Ascending aorta (tissue), 2 donors: ENCODE measurements at regions of chr2 and their contacts with region 1.

Region 1: DNA sequence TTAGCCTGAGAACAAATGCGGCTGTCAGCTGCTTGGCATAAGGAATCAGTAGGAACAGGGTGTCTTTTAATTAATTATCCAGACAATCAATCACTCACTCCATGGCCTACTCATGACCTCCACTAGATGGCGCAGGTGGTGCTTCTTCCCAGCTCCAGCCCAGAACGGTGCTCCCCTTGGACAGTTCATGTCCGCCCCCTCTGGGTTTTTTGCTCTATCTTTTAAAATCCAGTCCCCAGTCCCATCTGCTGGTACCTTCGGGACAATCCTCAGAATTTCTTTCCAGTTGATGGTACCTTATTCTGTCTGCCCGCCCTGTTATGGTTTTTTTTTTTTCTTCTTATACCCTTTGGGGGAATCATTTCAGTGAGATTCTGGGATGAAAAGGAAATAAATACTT is 99.8 kb downstream of the CACNB4 start:
- DNase-seq: no peak
- H3K4me3 ChIP-seq: no peak overlapping the region
- H3K27ac ChIP-seq: no peak overlapping the region
- H3K4me1 ChIP-seq: peaks cover 7 to 12% of the 10 kb centered on the region in 2 donors
- H3K27me3 ChIP-seq: no peaks in the 10 kb centered on the region
- CTCF ChIP-seq: peak; percentile 13 to 60 (median 52)

Region 2: DNA sequence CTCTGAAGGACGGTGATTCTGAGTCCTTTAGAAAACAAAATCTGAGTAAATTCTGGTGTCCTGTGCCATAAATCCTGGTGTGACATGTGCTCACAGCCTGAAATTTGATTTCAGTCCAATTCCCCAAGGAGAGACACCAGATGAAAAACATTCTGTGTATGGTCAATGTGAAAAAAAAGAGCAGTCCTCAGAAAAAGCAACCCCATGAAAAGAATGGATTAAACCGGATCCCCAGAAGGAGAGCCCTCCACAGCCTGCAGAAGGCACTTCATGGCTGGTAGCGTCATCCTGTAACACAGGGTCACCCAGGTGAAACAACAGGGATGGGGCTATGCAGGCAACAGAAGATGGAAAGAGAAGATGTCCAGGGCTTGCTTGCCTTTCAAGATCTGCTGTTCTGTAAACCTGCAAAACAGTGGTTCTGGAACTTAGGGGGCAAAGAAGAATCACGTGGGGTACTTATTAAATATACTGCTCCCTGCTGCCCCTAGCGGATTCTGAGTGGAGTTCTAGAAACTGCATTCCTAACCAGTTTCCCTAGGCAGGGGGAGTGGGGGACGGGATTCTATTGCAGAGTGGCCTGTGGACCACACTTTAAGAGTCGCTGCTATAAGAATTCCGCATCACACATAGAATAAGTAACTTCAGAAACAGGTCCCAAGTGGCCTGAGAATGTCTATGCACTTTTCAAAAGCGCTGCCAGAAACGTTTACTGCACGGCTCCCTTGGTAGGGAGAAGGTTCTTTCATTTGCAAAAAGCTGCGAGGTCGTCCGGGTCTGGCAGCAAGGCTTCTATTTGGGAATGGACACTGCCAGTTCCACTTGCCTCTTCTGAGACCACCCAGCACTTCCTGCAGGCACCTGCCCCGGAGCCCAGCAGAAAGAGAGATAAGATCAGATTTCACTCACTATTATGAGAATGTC is 51.9 kb before region 1 on chr2:
- intact Hi-C with region 1: loop called (anchors 2 kb)
- DNase-seq: peak in 1 of 2 donors; percentile 72
- H3K4me3 ChIP-seq: peak overlapping the region; percentile 51 to 53
- H3K27ac ChIP-seq: peak overlapping the region; percentile 69 to 70
- H3K4me1 ChIP-seq: peaks cover 0 to 12% of the 10 kb centered on the region in 2 donors
- H3K27me3 ChIP-seq: no peaks in the 10 kb centered on the region
- CTCF ChIP-seq: peak; percentile 53 to 70 (median 56)